CD8-positive, alpha-beta memory T cell (primary cell): ENCODE measurements at regions of chr2 and their contacts with region 1.

Region 1: GRCh38 chr2:136005462-136006196 is 20.2 kb upstream of the DARS1 start:
- DNase-seq: no peak
- H3K4me3 ChIP-seq: no peak overlapping the region
- H3K4me3 Mint-ChIP-seq: no peak overlapping the region
- H3K27ac ChIP-seq: no peak overlapping the region
- H3K27ac Mint-ChIP-seq: peak overlapping the region in 2 of 8 donors; percentile 12 to 19
- H3K4me1 ChIP-seq: peaks cover 22% of the 10 kb centered on the region
- H3K4me1 Mint-ChIP-seq: peaks cover 26 to 35% (median 27%) of the 10 kb centered on the region in 3 donors
- H3K27me3 ChIP-seq: no peaks in the 10 kb centered on the region
- H3K27me3 Mint-ChIP-seq: peaks cover 0 to 4% of the 10 kb centered on the region in 2 donors

Region 2: DNA sequence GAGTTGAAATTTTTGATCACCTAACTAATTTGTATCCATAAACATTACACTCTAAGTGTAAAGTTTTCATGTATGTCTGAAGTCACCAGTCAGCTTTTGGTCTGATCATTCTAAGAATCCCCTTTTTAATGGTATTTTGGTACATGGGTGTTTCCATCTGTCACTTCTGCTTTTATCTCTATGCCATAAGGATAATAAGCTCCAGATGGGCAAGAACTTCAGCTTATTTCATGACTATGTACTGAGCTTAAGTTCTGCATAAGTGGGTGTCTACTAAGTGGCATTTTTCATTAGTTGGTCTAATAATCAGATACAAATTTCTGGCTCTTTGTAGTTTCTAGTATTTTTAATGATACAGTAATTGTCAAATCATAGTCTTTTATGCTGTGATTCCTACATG is 243.6 kb before region 1 on chr2:
- CTCF ChIA-PET with region 1: interaction called, 3 read pairs
- POLR2A ChIA-PET with region 1: interaction called, 15 read pairs
- DNase-seq: no peak
- H3K4me3 ChIP-seq: no peak overlapping the region
- H3K4me3 Mint-ChIP-seq: no peak overlapping the region
- H3K27ac ChIP-seq: no peak overlapping the region
- H3K27ac Mint-ChIP-seq: no peak overlapping the region
- H3K4me1 ChIP-seq: no peaks in the 10 kb centered on the region
- H3K4me1 Mint-ChIP-seq: peaks cover 6 to 16% (median 13%) of the 10 kb centered on the region in 3 donors
- H3K27me3 ChIP-seq: no peaks in the 10 kb centered on the region
- H3K27me3 Mint-ChIP-seq: no peaks in the 10 kb centered on the region

Region 3: GRCh38 chr2:135820003-135820618 is 185.5 kb before region 1 on chr2:
- CTCF ChIA-PET with region 1: no interaction called
- POLR2A ChIA-PET with region 1: no interaction called
- DNase-seq: peak; percentile 10 to 76 (median 32)
- H3K4me3 ChIP-seq: no peak overlapping the region
- H3K4me3 Mint-ChIP-seq: peak overlapping the region in 6 of 7 donors; percentile 32 to 67 (median 56)
- H3K27ac ChIP-seq: no peak overlapping the region
- H3K27ac Mint-ChIP-seq: peak overlapping the region in 7 of 8 donors; percentile 1 to 84 (median 21)
- H3K4me1 ChIP-seq: peaks cover 13% of the 10 kb centered on the region
- H3K4me1 Mint-ChIP-seq: peaks cover 11 to 22% (median 22%) of the 10 kb centered on the region in 3 donors
- H3K27me3 ChIP-seq: no peaks in the 10 kb centered on the region
- H3K27me3 Mint-ChIP-seq: peaks cover 0 to 7% of the 10 kb centered on the region in 2 donors